ENCODE measurements at regions of chr9 and their contacts with region 1.

Region 1: DNA sequence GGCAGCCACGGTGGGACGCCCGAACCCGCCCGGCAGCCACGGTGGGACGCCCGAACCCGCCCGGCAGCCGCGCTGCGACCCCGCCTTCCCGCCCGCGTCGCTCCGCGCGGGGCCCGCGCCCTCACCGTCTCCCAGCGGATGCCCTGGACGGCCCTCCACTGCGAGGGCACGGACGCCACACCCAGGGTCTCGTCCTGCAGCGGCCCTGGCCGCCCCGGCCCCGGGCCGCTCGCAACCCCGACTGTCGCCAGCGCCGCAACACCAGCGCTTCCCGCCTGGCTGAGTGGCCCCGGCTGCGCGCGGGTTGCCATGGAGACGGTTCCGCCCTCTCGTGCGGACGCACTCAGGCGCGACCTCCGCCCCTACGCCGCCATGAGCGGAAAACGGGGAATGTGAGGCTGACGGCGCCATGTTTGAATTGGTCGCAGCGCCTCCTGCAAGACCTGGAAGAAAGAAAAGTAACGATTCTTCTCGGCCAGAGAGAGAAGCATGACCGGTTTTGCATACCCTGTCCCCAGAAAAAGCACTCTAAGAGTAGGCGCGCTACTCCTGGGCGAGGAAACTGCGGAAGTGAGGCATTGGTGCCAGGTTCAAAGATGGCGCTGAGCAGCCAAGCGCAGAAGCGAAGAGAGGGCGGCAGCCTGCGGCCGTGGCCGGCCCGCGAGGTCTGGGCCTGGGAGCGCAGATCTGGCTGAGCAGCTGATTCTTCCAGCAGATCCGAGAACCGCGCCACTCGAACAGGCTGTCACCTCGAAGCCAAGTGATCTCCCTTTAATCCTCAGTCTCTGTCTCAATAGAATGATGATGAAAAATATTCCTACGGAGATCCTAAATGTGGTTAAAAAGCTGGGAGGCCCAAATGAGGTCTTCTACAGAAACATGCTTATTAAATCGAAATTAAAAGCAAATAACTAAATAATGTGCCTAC is at the start of gene DYNC2I2:
- DNase-seq: peak; percentile 97 to 99 (median 98)
- ATAC-seq: peak; percentile 98 to 100 (median 100)
- H3K4me3 ChIP-seq: peak within 1 kb of the TSS; percentile 54 to 97 (median 68)
- H3K27ac ChIP-seq: peak within 1 kb of the TSS; percentile 93 to 100 (median 98)
- H3K4me1 ChIP-seq: peaks cover 0 to 11% (median 6%) of the 10 kb centered on the region in 12 donors
- H3K27me3 ChIP-seq: no peaks in the 10 kb centered on the region
- CTCF ChIP-seq: peak in 1 of 12 donors; percentile 17
- POLR2A ChIP-seq: peak in 1 of 2 donors; percentile 66
- total RNA-seq, gene DYNC2I2: 20.5 to 50.2 (median 27.0) TPM

Region 2: DNA sequence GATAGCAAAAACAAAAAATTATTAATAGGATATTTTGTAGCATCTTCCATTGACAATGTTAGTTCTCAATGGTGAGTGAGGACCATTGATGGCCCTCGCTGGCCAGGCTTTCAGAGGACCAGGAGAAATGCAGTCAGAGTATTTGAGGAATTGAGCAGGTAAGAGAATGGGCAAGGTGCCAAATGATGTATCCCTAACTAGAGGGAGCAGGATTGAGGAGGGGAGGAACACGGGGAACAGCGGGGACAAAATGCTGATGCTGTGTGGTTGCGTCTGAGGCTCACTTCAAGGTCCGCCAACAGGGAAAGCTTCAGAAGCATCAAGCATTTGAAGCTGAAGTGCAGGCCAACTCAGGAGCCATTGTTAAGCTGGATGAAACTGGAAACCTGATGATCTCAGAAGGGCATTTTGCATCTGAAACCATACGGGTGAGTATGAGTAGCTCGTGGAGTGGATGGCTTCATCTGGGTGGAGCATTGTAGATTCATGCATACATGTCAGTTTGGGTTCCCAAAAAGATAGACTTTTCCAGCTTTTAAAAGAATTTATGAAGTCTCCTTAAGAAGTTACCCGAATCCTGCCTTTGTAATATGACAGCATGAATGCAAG is 88.1 kb before region 1 on chr9:
- intact Hi-C with region 1: no loop called
- DNase-seq: no peak
- ATAC-seq: no peak
- H3K4me3 ChIP-seq: no peak overlapping the region
- H3K27ac ChIP-seq: no peak overlapping the region
- H3K4me1 ChIP-seq: peaks cover 4 to 26% (median 13%) of the 10 kb centered on the region in 12 donors
- H3K27me3 ChIP-seq: no peaks in the 10 kb centered on the region
- CTCF ChIP-seq: no peak
- POLR2A ChIP-seq: no peak

Region 3: DNA sequence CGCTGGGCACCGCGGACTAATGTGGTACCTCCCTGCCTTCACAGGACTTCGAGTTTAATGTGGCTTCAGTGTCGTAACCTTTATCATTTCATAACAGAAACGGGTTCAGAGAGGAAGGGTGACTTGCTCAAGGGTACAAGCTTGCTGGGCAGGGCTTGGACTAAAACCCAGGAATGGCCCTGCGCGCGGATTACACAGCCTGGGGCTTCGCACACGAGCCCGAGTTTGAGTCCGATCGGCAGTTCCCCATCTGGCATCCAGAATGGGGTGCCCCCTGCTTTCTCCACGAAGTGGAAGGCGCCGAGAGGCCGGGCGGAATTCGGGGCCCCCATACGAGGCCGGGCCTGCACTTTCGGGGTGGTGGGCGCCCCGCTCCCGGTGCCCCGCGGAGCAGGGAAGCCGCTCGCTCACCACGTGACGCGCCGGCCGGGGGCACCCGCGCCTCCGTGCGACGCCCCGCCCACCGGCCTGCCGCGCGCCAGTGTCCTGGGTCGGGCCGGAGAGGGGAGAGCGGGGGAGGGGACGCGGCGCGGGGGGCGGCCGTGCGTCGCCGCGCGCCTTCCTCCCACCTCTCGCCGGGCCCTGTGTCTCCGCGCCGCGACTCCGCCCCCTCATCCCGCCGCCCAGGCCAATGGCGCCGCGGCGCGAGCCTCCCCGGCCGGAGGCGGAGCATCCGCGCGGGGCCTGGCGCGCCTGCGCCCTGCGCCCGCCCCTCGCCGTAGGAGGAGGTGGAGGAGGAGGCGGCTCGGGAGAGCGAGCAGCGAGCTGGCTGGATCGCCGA is 32.0 kb after region 1 on chr9 and contains the start of gene SET:
- intact Hi-C with region 1: loop called in 3 of 10 experiments (anchors 2 kb)
- DNase-seq: peak; percentile 96 to 98 (median 97)
- ATAC-seq: peak; percentile 80 to 96 (median 92)
- H3K4me3 ChIP-seq: peak within 1 kb of the TSS; percentile 68 to 96 (median 78)
- H3K27ac ChIP-seq: peak within 1 kb of the TSS; percentile 91 to 99 (median 96)
- H3K4me1 ChIP-seq: peaks cover 5 to 51% (median 27%) of the 10 kb centered on the region in 12 donors
- H3K27me3 ChIP-seq: no peaks in the 10 kb centered on the region
- CTCF ChIP-seq: no peak
- POLR2A ChIP-seq: peak; percentile 59 to 97
- total RNA-seq, gene SET: 96.8 to 240 (median 211) TPM

Region 4: GRCh38 chr9:128723866-128724743 is 67.4 kb after region 1 on chr9 and contains the start of gene ZDHHC12:
- intact Hi-C with region 1: loop called in 1 of 10 experiments (anchors 2 kb)
- DNase-seq: peak; percentile 93 to 98 (median 97)
- ATAC-seq: peak; percentile 87 to 93 (median 92)
- H3K4me3 ChIP-seq: peak within 1 kb of the TSS; percentile 18 to 86 (median 71)
- H3K27ac ChIP-seq: peak within 1 kb of the TSS; percentile 18 to 86 (median 79)
- H3K4me1 ChIP-seq: peaks cover 0 to 21% (median 6%) of the 10 kb centered on the region in 12 donors
- H3K27me3 ChIP-seq: no peaks in the 10 kb centered on the region
- CTCF ChIP-seq: no peak
- POLR2A ChIP-seq: peak in 1 of 2 donors; percentile 81
- total RNA-seq, gene ZDHHC12: 5.1 to 26.0 (median 10.5) TPM

Measured in heart left ventricle (tissue), 16 donors.